Caco-2 (cell line): ENCODE measurements at regions of chr1 and their contacts with region 1.

Region 1: DNA sequence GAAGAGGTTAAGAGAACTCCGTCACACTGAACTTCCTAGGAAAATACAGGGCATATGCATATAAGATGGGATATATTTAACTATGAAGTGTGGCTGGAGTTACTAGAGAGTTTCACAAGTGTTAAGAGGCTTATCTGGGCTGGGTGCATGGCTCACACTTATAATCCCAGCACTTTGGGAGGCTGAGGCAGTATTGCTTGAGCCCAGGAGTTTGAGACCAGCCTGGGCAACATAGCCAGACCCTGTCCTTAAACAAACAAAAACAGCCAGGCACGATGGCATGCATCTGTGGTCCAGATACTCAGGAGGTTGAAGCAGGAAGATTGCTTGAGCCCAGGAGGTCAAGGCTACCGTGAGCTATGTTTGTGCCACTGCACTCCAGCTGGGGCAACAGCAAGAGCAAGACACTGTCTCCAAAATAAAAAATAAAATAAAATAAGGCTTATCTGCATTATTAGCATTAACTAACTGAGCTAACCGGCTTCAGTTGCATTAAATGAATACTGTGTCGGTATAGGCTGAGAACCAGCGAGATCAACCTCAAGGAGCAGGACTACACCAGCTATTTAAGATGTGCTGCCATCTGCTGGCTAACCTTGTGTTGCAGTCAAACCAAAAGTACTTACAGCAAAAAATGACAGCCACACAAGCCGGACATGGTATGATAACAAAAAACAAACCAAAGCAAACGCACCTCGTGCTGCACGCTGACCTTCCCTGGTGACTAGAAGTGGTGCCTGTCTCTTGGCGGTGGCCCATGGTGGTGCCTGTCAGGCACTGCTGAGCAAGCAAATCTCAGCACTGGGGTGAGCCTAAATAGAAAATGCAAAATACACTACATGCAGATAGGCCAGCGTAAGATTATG is 19.7 kb upstream of the RBBP5 start:
- DNase-seq: peak; percentile 56 to 72
- H3K4me3 ChIP-seq: no peak overlapping the region
- H3K4me3 Mint-ChIP-seq: no peak overlapping the region
- H3K27ac Mint-ChIP-seq: no peak overlapping the region
- H3K4me1 ChIP-seq: peaks cover 15% of the 10 kb centered on the region
- H3K4me1 Mint-ChIP-seq: peaks cover 11% of the 10 kb centered on the region
- H3K27me3 ChIP-seq: no peaks in the 10 kb centered on the region
- H3K27me3 Mint-ChIP-seq: no peaks in the 10 kb centered on the region
- CTCF ChIP-seq: peak; percentile 66 to 67

Region 2: DNA sequence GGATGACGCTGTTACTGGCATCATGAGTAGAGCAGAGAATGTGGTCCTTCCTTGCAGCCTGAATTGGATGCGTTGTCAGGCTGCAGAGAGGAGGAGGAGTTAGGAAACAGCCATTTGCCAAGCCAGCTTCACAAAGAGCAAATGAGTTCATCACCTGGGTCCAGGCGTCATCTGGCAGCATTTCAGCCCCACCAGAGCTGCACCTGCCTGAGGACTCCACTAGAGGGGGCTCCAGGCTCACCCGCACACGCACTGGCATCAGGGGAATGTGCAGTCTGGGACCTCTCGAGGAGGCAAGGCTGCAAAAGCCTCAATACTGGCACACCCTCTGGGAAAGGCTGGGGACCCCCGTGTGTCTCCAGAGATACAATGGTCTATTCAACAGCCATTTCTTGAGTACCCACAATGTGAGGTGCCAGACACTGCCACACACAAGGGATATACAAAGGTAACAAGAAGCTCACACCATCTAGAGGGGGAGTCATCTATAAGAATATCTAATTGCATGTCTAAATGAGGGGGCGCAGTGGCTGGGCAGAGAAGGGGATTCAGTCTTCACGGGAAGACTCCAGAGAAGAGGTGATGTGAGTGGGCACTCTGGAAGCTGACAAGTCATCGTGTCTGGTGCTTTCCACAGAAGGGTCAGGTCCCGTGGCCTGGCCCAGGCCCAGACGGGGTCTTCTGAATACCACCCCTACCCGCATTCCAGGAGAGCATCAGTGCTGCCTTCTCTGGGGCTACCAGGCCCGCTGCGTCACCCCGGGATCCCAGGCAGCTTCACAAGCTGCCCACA is 152.0 kb before region 1 on chr1:
- CTCF ChIA-PET with region 1: interaction called, 4 read pairs
- POLR2A ChIA-PET with region 1: no interaction called
- intact Hi-C with region 1: loop called (anchors 1 kb)
- DNase-seq: peak; percentile 61 to 76
- H3K4me3 ChIP-seq: no peak overlapping the region
- H3K4me3 Mint-ChIP-seq: no peak overlapping the region
- H3K27ac Mint-ChIP-seq: no peak overlapping the region
- H3K4me1 ChIP-seq: no peaks in the 10 kb centered on the region
- H3K4me1 Mint-ChIP-seq: no peaks in the 10 kb centered on the region
- H3K27me3 ChIP-seq: no peaks in the 10 kb centered on the region; the same call in 1 of the 2 replicates
- H3K27me3 Mint-ChIP-seq: peaks cover 22% of the 10 kb centered on the region
- CTCF ChIP-seq: peak; percentile 94 to 97

Region 3: GRCh38 chr1:205237526-205238484 is 96.3 kb after region 1 on chr1:
- CTCF ChIA-PET with region 1: no interaction called
- POLR2A ChIA-PET with region 1: no interaction called
- intact Hi-C with region 1: no loop called
- DNase-seq: no peak
- H3K4me3 ChIP-seq: no peak overlapping the region
- H3K4me3 Mint-ChIP-seq: no peak overlapping the region
- H3K27ac Mint-ChIP-seq: no peak overlapping the region
- H3K4me1 ChIP-seq: no peaks in the 10 kb centered on the region
- H3K4me1 Mint-ChIP-seq: no peaks in the 10 kb centered on the region
- H3K27me3 ChIP-seq: no peaks in the 10 kb centered on the region
- H3K27me3 Mint-ChIP-seq: peaks cover 7% of the 10 kb centered on the region
- CTCF ChIP-seq: no peak